ENCODE measurements at regions of chr1 and their contacts with region 1.

Region 1: GRCh38 chr1:15603050-15603965 is 13.9 kb upstream of the DDI2 start:
- DNase-seq: peak; percentile 97 to 98 (median 98)
- H3K4me3 ChIP-seq: peak overlapping the region; percentile 60 to 98 (median 87)
- H3K27ac ChIP-seq: peak overlapping the region in 58 of 59 donors; percentile 58 to 96 (median 86)
- H3K27me3 ChIP-seq: no peaks in the 10 kb centered on the region
- CTCF ChIP-seq: peak in 13 of 56 donors; percentile 1 to 38 (median 20)

Region 2: DNA sequence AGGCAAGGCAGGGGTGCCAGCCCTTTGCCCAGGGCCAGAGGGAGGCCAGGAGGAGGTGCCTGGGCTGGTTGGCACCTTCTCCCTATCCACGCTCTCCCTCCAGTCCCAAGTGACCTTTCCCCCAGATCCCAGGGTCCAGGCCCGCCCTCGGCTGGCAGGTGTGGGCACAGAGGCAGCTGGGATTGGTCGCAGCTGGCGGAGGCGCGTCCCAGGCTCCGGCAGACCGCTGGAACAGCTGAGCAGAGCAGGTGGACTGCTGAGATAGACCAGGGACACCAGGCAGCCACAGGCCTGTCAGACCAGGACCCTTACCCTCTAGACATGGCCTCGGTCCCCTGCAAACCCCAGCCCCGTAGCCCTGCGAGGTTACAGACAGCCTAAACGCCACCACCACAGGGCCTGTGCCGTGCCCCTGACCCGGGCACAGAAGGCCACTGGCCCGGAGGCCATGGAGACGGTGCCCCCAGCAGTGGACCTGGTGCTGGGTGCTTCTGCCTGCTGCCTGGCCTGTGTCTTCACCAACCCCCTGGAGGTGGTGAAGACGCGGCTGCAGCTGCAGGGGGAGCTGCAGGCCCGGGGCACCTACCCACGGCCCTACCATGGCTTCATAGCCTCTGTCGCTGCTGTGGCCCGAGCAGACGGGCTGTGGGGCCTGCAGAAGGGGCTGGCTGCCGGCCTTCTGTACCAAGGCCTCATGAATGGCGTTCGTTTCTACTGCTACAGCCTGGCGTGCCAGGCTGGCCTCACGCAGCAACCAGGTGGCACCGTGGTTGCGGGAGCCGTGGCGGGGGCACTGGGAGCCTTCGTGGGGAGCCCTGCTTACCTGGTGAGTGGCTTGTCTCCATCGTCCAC is 133.0 kb after region 1 on chr1 and contains the start of gene SLC25A34:
- intact Hi-C with region 1: loop called in 1 of 2 experiments (anchors 10 kb)
- DNase-seq: no peak
- H3K4me3 ChIP-seq: no peak within 1 kb of the TSS
- H3K27ac ChIP-seq: peak within 1 kb of the TSS in 32 of 59 donors; percentile 0 to 74 (median 42)
- H3K27me3 ChIP-seq: no peaks in the 10 kb centered on the region
- CTCF ChIP-seq: no peak
- total RNA-seq, gene SLC25A34: 1.3 to 10.3 (median 4.4) TPM

Measured in dorsolateral prefrontal cortex (tissue), 120 donors.